G401 (cell line): ENCODE measurements at regions of chr5 and their contacts with region 1.

Region 1: GRCh38 chr5:10729320-10730042 is 31.6 kb downstream of the DAP start:
- DNase-seq: no peak

Region 2: DNA sequence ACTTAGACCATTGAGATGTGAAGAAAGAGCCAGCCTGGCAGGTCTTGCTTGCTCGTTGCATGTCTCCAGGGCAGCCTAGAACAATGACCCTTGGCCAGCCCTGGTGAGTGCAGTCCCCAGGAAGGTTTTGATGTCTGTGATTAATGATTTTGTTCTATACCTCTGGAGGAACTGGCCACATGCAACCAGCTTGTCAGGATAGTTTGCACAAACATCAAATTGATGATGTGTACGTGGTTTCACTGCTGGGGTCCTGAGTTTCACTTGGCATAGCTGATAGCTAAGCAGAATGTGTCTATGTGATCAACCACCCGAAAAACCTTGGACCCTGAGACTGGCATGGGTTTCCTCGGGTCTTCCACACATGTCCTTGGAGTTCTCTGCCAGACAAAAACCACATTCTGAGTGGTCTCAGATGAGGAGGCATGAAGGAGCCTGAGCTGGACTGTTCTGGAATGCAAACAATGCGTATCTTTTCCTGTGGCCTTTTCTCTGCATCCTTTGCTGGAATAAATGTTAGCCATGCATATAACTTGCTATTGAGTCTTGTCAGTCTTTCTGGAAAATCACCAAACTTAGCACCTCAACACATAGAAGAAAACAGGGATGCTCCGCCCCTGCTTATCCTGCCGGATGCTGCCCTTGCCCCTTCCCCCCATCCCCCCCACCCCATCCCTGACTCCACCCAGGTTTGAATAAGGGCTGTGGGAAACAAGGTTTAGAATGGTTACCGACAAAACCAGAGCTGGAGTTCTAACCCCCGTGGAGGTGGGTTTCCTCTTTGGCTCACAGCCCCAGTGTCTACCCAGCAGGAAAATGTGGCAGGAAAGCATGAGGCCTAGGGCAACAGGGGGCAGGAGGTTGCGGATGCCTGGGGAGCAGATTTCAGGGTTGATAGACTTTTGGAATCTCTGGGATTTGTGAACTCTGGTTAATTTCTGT is 215.7 kb before region 1 on chr5:
- in situ Hi-C with region 1: no loop called
- DNase-seq: peak; percentile 25

Region 3: GRCh38 chr5:10689391-10690081 is 39.9 kb before region 1 on chr5:
- in situ Hi-C with region 1: loop called (anchors 5 kb)
- DNase-seq: peak; percentile 11